H1 (cell line): ENCODE measurements at regions of chr20 and their contacts with region 1.

Region 1: DNA sequence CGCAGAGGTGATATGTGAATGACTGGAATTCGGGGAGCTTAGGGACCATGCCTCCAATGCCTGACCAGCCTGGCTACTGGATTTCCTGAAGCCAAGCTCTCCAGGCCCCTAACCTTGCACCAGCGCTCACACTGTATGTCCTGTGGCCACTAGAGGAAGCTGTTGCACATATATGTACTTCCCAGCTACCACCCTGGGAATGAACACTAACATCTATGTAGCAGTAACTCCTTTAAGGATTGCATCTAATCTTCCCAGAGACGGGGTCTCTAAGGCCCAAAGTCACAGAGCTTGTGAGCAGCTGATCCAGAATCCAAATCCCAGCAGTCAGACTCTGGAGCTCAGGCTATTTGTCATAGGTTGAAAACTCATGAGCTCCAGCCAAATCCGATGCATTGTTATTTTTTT is 20.4 kb upstream of the BPIFB1 start:
- DNase-seq: peak in 1 of 2 experiments; percentile 5
- H3K4me3 ChIP-seq: no peak overlapping the region
- H3K27ac ChIP-seq: no peak overlapping the region
- H3K4me1 ChIP-seq: no peaks in the 10 kb centered on the region
- H3K27me3 ChIP-seq: 0 out of 7 replicates have a peak, but pooled peaks cover 0 to 3% (median 0%) of the 10 kb centered on the region in 4 experiments
- CTCF ChIP-seq: peak; percentile 67 to 87 (median 86)
- EP300 ChIP-seq: no peak
- POLR2A ChIP-seq: no peak
- RAD21 ChIP-seq: peak; percentile 76 to 88

Region 2: DNA sequence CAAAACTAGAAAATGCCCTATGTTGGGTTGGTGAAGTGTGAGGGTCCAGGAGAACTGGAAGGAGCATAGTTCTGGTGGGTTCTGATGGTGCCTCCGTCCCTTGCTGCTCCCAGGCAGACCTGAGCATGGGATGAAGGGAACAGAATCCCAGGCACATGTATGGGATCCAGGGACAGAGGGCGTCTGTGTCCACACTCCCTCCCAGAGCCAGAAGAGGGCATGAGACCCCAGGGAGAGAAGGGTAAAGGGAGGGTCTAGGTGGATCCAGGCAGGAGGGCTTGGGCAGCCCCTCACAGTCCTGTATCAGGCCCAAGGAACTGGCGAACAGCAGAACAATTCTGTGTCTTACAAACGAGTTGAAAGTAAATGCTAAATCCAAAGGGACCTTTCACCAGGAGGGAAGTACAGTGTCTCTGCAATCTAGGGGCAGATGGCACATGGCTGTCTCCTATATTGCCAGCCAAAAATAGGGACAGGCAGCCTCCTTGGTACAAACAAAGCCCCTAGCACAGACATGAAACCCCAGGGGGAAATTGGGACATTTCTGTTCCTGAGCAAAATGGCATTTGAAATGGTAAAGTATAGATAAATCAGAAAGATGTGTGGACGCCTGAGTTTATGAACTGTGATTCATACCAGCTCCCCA is 29.4 kb before region 1 on chr20:
- CTCF ChIA-PET with region 1: interaction called, 14 read pairs
- POLR2A ChIA-PET with region 1: no interaction called
- DNase-seq: peak; percentile 21 to 54
- H3K4me3 ChIP-seq: no peak overlapping the region
- H3K27ac ChIP-seq: no peak overlapping the region
- H3K4me1 ChIP-seq: 0 out of 7 replicates have a peak, but pooled peaks cover 0 to 3% (median 0%) of the 10 kb centered on the region in 4 experiments
- H3K27me3 ChIP-seq: no peaks in the 10 kb centered on the region
- CTCF ChIP-seq: peak; percentile 66 to 79 (median 77)
- EP300 ChIP-seq: no peak
- POLR2A ChIP-seq: no peak
- RAD21 ChIP-seq: peak; percentile 74 to 87

Region 3: DNA sequence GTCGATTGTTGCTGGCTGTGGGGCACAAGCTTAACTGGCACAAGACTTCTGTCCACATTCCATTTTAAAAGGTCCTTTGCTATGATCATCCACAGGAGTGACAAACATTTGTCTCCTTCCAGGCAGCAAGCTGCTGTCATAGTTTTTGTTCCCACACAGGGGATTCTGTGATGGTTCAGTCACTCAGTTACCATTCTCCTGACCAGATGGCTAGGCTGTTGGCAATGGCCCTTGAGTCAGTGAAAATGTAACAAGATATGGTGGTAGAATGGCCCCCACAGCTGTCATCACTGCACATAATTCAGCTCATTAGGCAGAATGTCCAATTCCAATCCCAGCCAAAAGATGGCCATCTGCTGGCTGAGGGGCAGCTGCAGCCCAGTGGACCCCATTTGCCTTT is 13.2 kb before region 1 on chr20:
- CTCF ChIA-PET with region 1: interaction called, 11 read pairs
- POLR2A ChIA-PET with region 1: interaction called, 4 read pairs
- DNase-seq: no peak
- H3K4me3 ChIP-seq: no peak overlapping the region
- H3K27ac ChIP-seq: no peak overlapping the region
- H3K4me1 ChIP-seq: no peaks in the 10 kb centered on the region
- H3K27me3 ChIP-seq: no peaks in the 10 kb centered on the region
- CTCF ChIP-seq: no peak
- EP300 ChIP-seq: no peak
- POLR2A ChIP-seq: no peak
- RAD21 ChIP-seq: no peak

Region 4: DNA sequence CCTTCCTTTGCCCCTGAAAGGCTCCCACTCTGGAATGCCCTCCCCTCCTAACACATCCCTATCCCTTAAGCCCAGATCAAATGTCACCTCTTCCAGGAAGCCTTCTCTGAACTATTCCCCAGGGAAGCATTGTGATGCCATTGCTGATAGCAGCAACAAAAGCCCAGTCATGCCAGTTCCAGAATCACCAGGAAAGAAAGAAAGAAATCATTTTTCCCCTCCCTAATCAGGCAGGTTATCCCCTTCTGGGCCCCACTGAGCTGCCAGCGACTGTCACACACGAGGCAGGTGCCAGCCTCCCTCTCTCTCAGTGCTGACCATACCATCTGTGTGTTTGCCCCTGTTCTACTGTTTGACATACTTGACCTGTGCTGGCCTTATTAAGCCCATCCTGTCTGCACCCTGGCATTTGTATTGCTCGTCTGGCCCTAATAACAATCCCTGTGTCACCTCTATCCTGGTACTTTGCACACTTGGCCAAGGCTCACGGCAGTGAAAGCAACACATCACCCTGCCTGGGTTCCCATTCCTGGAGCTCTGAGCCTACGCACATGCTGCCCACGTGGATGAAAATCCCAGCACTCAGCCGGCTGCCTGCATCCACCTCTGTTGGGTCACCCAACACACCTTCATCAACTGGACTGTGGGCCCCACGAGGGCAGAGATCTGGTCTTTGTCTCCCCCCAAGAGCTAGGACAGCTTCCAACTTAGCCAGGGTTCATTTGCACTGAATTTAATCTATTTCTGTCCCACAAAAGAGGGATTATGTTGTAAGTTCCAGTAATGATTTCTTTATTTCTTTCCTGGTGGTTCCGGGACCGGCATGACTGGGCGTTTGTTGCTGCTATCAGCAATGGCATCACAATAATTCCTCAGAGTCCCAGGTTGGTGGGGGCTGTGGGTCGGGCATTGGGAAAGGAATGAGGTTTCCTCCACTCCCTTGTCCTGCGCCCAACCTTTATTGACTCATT is 15.1 kb after region 1 on chr20:
- CTCF ChIA-PET with region 1: interaction called, 23 read pairs
- POLR2A ChIA-PET with region 1: no interaction called
- DNase-seq: no peak
- H3K4me3 ChIP-seq: no peak overlapping the region
- H3K27ac ChIP-seq: 0 out of 2 replicates have a peak overlapping the region, but pooled peaks have one; percentile 1
- H3K4me1 ChIP-seq: peaks cover 0 to 14% (median 11%) of the 10 kb centered on the region in 4 experiments; a peak in 6 of 7 replicates
- H3K27me3 ChIP-seq: no peaks in the 10 kb centered on the region
- CTCF ChIP-seq: no peak
- EP300 ChIP-seq: no peak
- POLR2A ChIP-seq: no peak
- RAD21 ChIP-seq: no peak

Region 5: DNA sequence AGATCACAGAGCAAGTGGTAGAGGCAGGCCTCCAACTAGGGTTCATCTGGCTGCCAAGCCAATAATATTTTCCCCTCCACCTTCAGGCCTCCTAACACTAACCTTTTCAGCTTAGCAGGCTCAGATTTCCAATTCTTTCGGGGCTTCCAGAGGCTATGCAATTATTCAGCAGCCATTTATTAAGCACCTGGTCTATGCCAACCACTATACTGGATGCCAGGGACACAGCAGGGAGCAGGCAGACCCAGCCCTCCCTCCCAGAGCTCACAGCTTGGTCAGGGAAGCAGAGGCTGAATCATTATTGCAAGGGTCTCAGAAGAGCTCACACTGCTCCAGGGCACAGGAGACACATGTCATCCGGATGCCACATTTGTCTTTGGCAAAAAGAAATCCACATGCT is 21.6 kb after region 1 on chr20:
- CTCF ChIA-PET with region 1: interaction called, 81 read pairs
- POLR2A ChIA-PET with region 1: no interaction called
- DNase-seq: no peak
- H3K4me3 ChIP-seq: no peak overlapping the region
- H3K27ac ChIP-seq: no peak overlapping the region
- H3K4me1 ChIP-seq: peaks cover 0 to 2% (median 0%) of the 10 kb centered on the region in 4 experiments; a peak in 3 of 7 replicates
- H3K27me3 ChIP-seq: no peaks in the 10 kb centered on the region
- CTCF ChIP-seq: no peak
- EP300 ChIP-seq: no peak
- POLR2A ChIP-seq: no peak
- RAD21 ChIP-seq: no peak

Region 6: GRCh38 chr20:33291830-33292355 is 29.2 kb after region 1 on chr20:
- CTCF ChIA-PET with region 1: interaction called, 81 read pairs
- POLR2A ChIA-PET with region 1: no interaction called
- DNase-seq: peak; percentile 57 to 98
- H3K4me3 ChIP-seq: no peak overlapping the region
- H3K27ac ChIP-seq: no peak overlapping the region
- H3K4me1 ChIP-seq: no peaks in the 10 kb centered on the region; a peak in 1 of 7 replicates
- H3K27me3 ChIP-seq: no peaks in the 10 kb centered on the region
- CTCF ChIP-seq: peak; percentile 94 to 99 (median 97)
- EP300 ChIP-seq: no peak
- POLR2A ChIP-seq: no peak
- RAD21 ChIP-seq: peak; percentile 89 to 94

Region 7: GRCh38 chr20:33299111-33299603 is 36.5 kb after region 1 on chr20:
- CTCF ChIA-PET with region 1: interaction called, 81 read pairs
- POLR2A ChIA-PET with region 1: no interaction called
- DNase-seq: peak; percentile 66 to 98
- H3K4me3 ChIP-seq: peak overlapping the region in 1 of 4 experiments; percentile 22; a peak in 1 of 8 replicates
- H3K27ac ChIP-seq: no peak overlapping the region
- H3K4me1 ChIP-seq: no peaks in the 10 kb centered on the region
- H3K27me3 ChIP-seq: peaks cover 0 to 2% (median 0%) of the 10 kb centered on the region in 4 experiments; a peak in 3 of 7 replicates
- CTCF ChIP-seq: peak; percentile 94 to 97 (median 97)
- EP300 ChIP-seq: no peak
- POLR2A ChIP-seq: no peak
- RAD21 ChIP-seq: peak; percentile 86 to 93

Region 8: GRCh38 chr20:33362898-33363297 is 100.2 kb after region 1 on chr20:
- CTCF ChIA-PET with region 1: no interaction called
- POLR2A ChIA-PET with region 1: no interaction called
- DNase-seq: no peak
- H3K4me3 ChIP-seq: no peak overlapping the region
- H3K27ac ChIP-seq: no peak overlapping the region
- H3K4me1 ChIP-seq: no peaks in the 10 kb centered on the region
- H3K27me3 ChIP-seq: no peaks in the 10 kb centered on the region
- CTCF ChIP-seq: no peak
- EP300 ChIP-seq: no peak
- POLR2A ChIP-seq: no peak
- RAD21 ChIP-seq: no peak

Region 9: DNA sequence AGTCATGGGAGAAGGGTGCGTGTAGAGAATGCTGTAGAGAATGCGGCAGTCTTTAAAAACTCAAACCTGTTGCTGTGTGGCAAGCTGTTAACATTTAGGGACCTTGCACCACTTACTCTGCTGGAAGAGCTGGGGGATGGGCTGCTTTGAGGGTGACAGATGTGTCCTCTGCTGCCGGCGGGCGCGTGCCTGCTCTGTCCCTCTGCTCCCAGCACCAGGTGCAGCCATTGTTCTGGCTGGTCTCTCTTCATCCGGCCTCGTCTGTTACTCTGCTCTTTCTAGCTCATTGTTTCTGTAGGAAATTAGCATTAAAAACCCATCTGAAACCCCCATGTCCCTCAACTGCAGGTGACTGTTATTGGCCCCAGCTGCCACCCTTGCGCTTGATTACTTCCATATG is 305.7 kb after region 1 on chr20:
- CTCF ChIA-PET with region 1: no interaction called
- POLR2A ChIA-PET with region 1: no interaction called
- DNase-seq: peak; percentile 75 to 89
- H3K4me3 ChIP-seq: peak overlapping the region in 1 of 4 experiments; percentile 27; a peak in 3 of 8 replicates
- H3K27ac ChIP-seq: no peak overlapping the region
- H3K4me1 ChIP-seq: peaks cover 0 to 12% (median 8%) of the 10 kb centered on the region in 4 experiments; a peak in 3 of 7 replicates
- H3K27me3 ChIP-seq: peaks cover 0 to 14% (median 10%) of the 10 kb centered on the region in 4 experiments; a peak in 4 of 7 replicates
- CTCF ChIP-seq: no peak
- EP300 ChIP-seq: peak in 1 of 2 experiments; percentile 96; a peak in 2 of 3 replicates
- POLR2A ChIP-seq: no peak
- RAD21 ChIP-seq: peak in 1 of 2 experiments; percentile 14; a peak in 1 of 4 replicates